ENCODE measurements at regions of chr4 and their contacts with region 1.

Region 1: DNA sequence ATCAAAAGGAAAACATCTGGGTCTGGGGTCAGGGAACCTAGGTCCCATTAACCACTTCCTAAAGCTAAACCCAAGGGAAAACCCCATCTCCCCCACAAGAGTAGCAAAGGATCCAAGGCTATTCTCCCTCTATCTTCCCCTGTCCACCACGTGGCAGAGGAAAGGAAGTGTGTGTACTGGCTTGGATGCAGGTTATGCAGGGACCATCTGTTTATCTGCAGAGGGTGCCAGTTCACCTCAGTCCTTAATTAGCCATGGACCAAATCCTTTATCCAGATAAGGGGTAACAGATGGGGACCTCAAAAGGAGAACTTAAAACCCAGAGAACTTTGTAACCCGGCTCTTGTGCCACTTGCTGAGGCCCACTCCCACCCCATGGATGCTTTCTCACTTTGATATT is 135.3 kb downstream of the ZNF518B start:
- DNase-seq: peak in 2 of 4 experiments; percentile 24 to 25
- ATAC-seq: no peak
- H3K4me3 ChIP-seq: no peak overlapping the region
- H3K27ac ChIP-seq: no peak overlapping the region
- H3K4me1 ChIP-seq: peaks cover 9 to 47% of the 10 kb centered on the region in 2 experiments; a peak in 4 of 5 replicates
- H3K27me3 ChIP-seq: no peaks in the 10 kb centered on the region
- CTCF ChIP-seq: no peak
- EP300 ChIP-seq: no peak
- POLR2A ChIP-seq: no peak
- RAD21 ChIP-seq: 0 out of 4 replicates have a peak, but pooled peaks of 1 of the 2 experiments have one; percentile 18

Region 2: GRCh38 chr4:10180927-10181782 is 140.8 kb before region 1 on chr4:
- CTCF ChIA-PET with region 1: no interaction called
- POLR2A ChIA-PET with region 1: no interaction called
- in situ Hi-C with region 1: no loop called
- intact Hi-C with region 1: loop called (anchors 5 kb)
- DNase-seq: peak; percentile 90 to 96 (median 94)
- ATAC-seq: peak; percentile 83
- H3K4me3 ChIP-seq: no peak overlapping the region
- H3K27ac ChIP-seq: peak overlapping the region; percentile 100
- H3K4me1 ChIP-seq: peaks cover 30 to 85% of the 10 kb centered on the region in 2 experiments
- H3K27me3 ChIP-seq: no peaks in the 10 kb centered on the region
- CTCF ChIP-seq: no peak
- EP300 ChIP-seq: peak; percentile 99
- POLR2A ChIP-seq: peak; percentile 82
- RAD21 ChIP-seq: peak in 1 of 2 experiments; percentile 19; a peak in 1 of 4 replicates

Region 3: GRCh38 chr4:10204401-10205058 is 117.4 kb before region 1 on chr4:
- CTCF ChIA-PET with region 1: no interaction called
- POLR2A ChIA-PET with region 1: no interaction called
- in situ Hi-C with region 1: no loop called
- intact Hi-C with region 1: loop called (anchors 5 kb)
- DNase-seq: no peak
- ATAC-seq: no peak
- H3K4me3 ChIP-seq: no peak overlapping the region
- H3K27ac ChIP-seq: peak overlapping the region; percentile 26
- H3K4me1 ChIP-seq: peaks cover 20 to 60% of the 10 kb centered on the region in 2 experiments
- H3K27me3 ChIP-seq: no peaks in the 10 kb centered on the region
- CTCF ChIP-seq: no peak
- EP300 ChIP-seq: no peak
- POLR2A ChIP-seq: no peak
- RAD21 ChIP-seq: no peak

Region 4: GRCh38 chr4:10288830-10289537 is 32.9 kb before region 1 on chr4:
- CTCF ChIA-PET with region 1: no interaction called
- POLR2A ChIA-PET with region 1: no interaction called
- in situ Hi-C with region 1: no loop called
- intact Hi-C with region 1: loop called (anchors 1 kb)
- DNase-seq: no peak
- ATAC-seq: no peak
- H3K4me3 ChIP-seq: no peak overlapping the region
- H3K27ac ChIP-seq: no peak overlapping the region
- H3K4me1 ChIP-seq: peaks cover 0 to 30% of the 10 kb centered on the region in 2 experiments; a peak in 4 of 5 replicates
- H3K27me3 ChIP-seq: no peaks in the 10 kb centered on the region
- CTCF ChIP-seq: no peak
- EP300 ChIP-seq: no peak
- POLR2A ChIP-seq: no peak
- RAD21 ChIP-seq: no peak

Region 5: DNA sequence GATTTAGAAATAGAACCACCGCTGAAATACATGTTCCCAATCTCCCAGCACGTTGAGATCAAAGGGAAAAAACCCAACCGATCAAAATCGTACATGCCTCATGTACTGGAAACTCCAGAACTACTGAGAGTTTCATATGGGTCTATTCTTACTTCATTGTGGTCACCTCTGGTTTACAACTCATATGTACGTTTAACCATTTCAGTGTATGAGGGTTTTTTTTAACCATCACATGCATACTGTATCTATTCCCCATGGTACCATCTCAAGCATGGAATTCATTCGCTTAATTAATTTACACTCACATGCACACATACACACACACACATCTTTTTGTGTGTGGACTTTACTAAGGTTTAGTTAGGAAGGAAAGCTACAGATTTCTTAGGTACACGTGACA is 408.7 kb after region 1 on chr4:
- CTCF ChIA-PET with region 1: no interaction called
- POLR2A ChIA-PET with region 1: no interaction called
- in situ Hi-C with region 1: no loop called
- intact Hi-C with region 1: no loop called
- DNase-seq: no peak
- ATAC-seq: no peak
- H3K4me3 ChIP-seq: no peak overlapping the region
- H3K27ac ChIP-seq: no peak overlapping the region
- H3K4me1 ChIP-seq: no peaks in the 10 kb centered on the region
- H3K27me3 ChIP-seq: no peaks in the 10 kb centered on the region
- CTCF ChIP-seq: no peak
- EP300 ChIP-seq: no peak
- POLR2A ChIP-seq: no peak
- RAD21 ChIP-seq: no peak